AG04449 (cell line): ENCODE measurements at regions of chr11 and their contacts with region 1.

Region 1: DNA sequence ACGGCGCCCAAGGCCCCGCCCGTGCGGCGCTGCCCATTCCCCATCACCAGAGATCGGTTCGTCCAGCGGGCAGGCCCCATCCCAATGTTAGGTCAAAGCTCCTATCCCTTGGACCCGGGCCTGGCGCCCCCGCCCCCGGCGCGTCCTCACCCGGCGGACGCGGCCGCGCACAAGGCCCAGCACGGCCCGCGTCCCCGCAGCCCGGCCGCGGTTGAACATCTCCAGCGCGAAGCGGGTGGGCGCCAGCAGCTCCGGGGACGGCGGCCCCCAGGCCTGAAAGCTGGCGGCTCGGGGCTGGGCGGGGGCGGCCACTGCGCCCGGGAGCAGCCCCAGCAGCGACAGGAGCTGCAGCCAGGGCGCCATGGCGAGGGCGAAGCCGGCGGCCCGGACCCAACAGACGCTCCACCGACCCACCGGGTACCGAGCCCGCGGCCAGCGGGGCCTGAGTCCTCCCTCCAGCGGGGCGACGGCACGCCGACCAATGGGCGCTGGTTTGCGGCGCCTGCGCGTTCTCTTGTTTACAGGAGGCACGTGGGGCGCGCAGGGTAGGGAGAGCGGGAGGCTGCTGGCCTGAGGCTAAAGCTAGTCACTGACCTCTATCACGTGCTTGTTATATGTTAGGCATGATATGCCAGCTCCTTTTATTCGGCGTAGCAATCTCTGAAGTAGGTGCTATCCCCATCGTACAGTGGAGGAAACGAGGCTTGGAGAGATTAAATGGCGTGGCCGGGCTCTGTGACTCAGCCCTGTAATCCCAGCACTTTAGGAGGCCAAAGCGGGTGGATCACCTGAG is at the start of gene CTSF:
- DNase-seq: no peak
- H3K4me3 ChIP-seq: peak within 1 kb of the TSS; percentile 57
- CTCF ChIP-seq: no peak

Region 2: GRCh38 chr11:66592457-66593302 is 24.4 kb after region 1 on chr11 and contains the starts of genes CCDC87 and CCS:
- CTCF ChIA-PET with region 1: interaction called, 15 read pairs
- POLR2A ChIA-PET with region 1: no interaction called
- DNase-seq: no peak
- H3K4me3 ChIP-seq: peak within 1 kb of the TSS; percentile 76
- CTCF ChIP-seq: peak; percentile 87